T-cell (primary cell): ENCODE measurements at regions of chr1 and their contacts with region 1.

Region 1: DNA sequence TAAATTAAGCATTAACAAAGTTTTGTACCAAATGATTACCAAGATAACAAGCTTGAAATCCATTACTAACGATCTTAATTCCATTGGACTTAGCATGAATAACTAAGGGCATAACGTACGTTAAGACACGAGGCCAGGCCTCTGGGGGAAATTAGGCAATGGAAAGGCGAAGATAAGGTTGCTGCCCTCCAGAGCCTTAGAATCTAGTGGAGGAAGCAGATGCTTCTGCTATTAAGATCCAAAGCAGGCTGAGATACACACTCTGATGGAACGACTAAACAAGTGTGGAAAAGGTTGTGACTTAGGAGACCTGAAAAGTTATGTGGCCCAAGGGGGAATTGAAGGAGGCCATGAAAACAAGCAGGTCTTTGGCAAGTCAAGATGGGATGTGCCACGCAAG is 6.0 kb downstream of the AKNAD1 start:
- DNase-seq: no peak
- ATAC-seq: no peak
- H3K4me3 ChIP-seq: no peak overlapping the region
- H3K4me3 Mint-ChIP-seq: no peak overlapping the region
- H3K27ac ChIP-seq: no peak overlapping the region
- H3K27ac Mint-ChIP-seq: no peak overlapping the region
- H3K4me1 ChIP-seq: no peaks in the 10 kb centered on the region
- H3K4me1 Mint-ChIP-seq: peaks cover 6 to 8% (median 7%) of the 10 kb centered on the region in 3 donors
- H3K27me3 ChIP-seq: peaks cover 0 to 15% of the 10 kb centered on the region in 2 experiments
- H3K27me3 Mint-ChIP-seq: peaks cover 4 to 9% of the 10 kb centered on the region in 2 donors

Region 2: GRCh38 chr1:108817016-108817415 is 33.9 kb before region 1 on chr1:
- CTCF ChIA-PET with region 1: no interaction called
- POLR2A ChIA-PET with region 1: interaction called in 1 of 2 experiments, 13 read pairs
- DNase-seq: no peak
- ATAC-seq: no peak
- H3K4me3 ChIP-seq: no peak overlapping the region
- H3K4me3 Mint-ChIP-seq: no peak overlapping the region
- H3K27ac ChIP-seq: no peak overlapping the region
- H3K27ac Mint-ChIP-seq: no peak overlapping the region
- H3K4me1 ChIP-seq: no peaks in the 10 kb centered on the region
- H3K4me1 Mint-ChIP-seq: no peaks in the 10 kb centered on the region
- H3K27me3 ChIP-seq: no peaks in the 10 kb centered on the region
- H3K27me3 Mint-ChIP-seq: peaks cover 0 to 3% of the 10 kb centered on the region in 2 donors